Dendritic cell treated with granulocyte-macrophage colony-stimulating factor and Interleukin-4, amounts not matched to agents 40 ng/mL and 50 ng/mL, for 4 days (primary cell): ENCODE measurements at regions of chr3 and their contacts with region 1.

Region 1: GRCh38 chr3:186783073-186783730 is at the start of gene EIF4A2:
- H3K4me3 Mint-ChIP-seq: peak within 1 kb of the TSS; percentile 86
- H3K27ac Mint-ChIP-seq: peak within 1 kb of the TSS; percentile 96
- H3K4me1 Mint-ChIP-seq: peaks cover 26% of the 10 kb centered on the region
- H3K27me3 Mint-ChIP-seq: peaks cover 3% of the 10 kb centered on the region

Region 2: DNA sequence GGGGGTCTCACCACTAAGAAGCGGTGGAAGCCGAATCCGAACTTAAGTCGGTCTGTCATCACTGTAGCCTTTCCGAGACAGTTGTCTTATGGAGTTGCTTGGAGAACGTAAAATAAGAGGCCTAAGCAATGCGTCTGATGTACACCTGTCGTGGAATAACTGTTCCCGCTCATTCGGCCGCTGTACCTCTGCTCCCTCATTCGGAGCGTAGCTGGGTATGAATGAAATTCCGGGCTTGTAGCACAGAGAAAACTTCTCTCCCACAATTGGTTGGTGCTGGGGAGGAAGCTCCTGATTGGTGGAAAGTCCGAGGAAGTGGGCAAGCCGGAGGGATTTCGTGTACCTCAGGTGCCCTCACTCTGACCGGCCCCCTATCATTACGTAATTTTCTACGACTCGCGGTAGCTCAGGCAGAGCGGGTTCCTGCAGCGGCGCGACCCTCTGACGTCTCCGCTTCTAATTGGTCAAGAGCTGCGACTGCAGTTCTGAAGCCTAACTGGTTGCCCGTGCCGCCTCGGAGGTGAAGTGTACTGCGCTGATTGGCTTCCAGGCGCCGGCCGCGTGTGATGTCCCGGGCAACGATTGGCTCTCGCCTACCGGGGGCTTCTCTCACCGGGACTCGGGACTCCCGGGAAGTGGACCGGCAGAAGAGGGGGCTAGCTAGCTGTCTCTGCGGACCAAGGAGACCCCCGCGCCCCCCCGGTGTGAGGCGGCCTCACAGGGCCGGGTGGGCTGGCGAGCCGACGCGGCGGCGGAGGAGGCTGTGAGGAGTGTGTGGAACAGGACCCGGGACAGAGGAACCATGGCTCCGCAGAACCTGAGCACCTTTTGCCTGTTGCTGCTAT is 212.9 kb before region 1 on chr3 and contains the start of gene DNAJB11:
- intact Hi-C with region 1: loop called (anchors 5 kb)
- H3K4me3 Mint-ChIP-seq: peak within 1 kb of the TSS; percentile 86
- H3K27ac Mint-ChIP-seq: peak within 1 kb of the TSS; percentile 96
- H3K4me1 Mint-ChIP-seq: peaks cover 53% of the 10 kb centered on the region
- H3K27me3 Mint-ChIP-seq: no peaks in the 10 kb centered on the region

Region 3: GRCh38 chr3:186772701-186773424 is 10.3 kb before region 1 on chr3:
- intact Hi-C with region 1: loop called (anchors 1 kb)
- H3K4me3 Mint-ChIP-seq: peak overlapping the region; percentile 88
- H3K27ac Mint-ChIP-seq: peak overlapping the region; percentile 90
- H3K4me1 Mint-ChIP-seq: peaks cover 18% of the 10 kb centered on the region
- H3K27me3 Mint-ChIP-seq: peaks cover 3% of the 10 kb centered on the region

Region 4: GRCh38 chr3:187551416-187551815 is 768.2 kb after region 1 on chr3:
- intact Hi-C with region 1: no loop called
- H3K4me3 Mint-ChIP-seq: no peak overlapping the region
- H3K27ac Mint-ChIP-seq: no peak overlapping the region
- H3K4me1 Mint-ChIP-seq: no peaks in the 10 kb centered on the region
- H3K27me3 Mint-ChIP-seq: no peaks in the 10 kb centered on the region